Naive thymus-derived CD4-positive, alpha-beta T cell (primary cell): ENCODE measurements at regions of chr3 and their contacts with region 1.

Region 1: DNA sequence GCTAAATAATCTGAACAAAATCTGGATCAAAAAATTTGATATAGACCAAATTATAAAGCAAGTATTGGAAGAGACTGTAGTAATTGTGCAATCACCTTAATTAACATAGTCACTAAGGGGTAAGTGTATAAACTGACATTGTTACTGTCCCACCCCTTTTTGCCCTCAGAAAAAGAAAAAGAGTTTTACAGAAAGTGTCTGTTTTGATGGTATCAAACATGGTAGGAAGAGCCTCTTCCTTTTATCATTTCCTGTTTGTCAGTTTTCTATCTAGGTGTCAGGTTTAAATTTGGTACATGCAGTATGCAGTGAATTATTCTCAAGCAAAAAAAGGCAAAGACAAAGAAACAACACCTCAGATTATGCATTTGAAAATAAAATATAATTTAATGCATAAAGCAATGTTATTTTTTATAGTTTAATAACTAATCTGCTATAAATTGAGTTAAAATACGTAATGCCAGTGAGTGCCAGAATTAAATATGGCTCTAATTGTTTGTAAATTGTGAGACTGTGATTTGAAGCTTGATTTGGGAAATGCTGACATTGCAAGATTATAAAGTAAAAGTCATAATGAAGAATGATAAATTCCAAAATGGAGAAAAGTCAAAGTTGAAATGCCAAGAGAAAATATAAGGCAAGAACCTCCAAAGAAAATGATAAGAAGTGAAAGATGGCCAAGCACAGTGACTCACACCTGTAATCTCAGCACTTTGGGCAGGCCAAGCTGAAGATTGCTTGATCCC is 30.3 kb upstream of the CMC1 start:
- DNase-seq: peak in 6 of 9 donors; percentile 33 to 69 (median 54)
- ATAC-seq: peak; percentile 83
- H3K4me3 ChIP-seq: no peak overlapping the region
- H3K4me3 Mint-ChIP-seq: peak overlapping the region in 9 of 10 donors; percentile 30 to 80 (median 66)
- H3K27ac ChIP-seq: no peak overlapping the region
- H3K27ac Mint-ChIP-seq: peak overlapping the region; percentile 15 to 90 (median 68)
- H3K4me1 ChIP-seq: peaks cover 9 to 24% of the 10 kb centered on the region in 2 donors
- H3K4me1 Mint-ChIP-seq: peaks cover 11 to 47% (median 34%) of the 10 kb centered on the region in 7 donors
- H3K27me3 ChIP-seq: no peaks in the 10 kb centered on the region
- H3K27me3 Mint-ChIP-seq: no peaks in the 10 kb centered on the region

Region 2: DNA sequence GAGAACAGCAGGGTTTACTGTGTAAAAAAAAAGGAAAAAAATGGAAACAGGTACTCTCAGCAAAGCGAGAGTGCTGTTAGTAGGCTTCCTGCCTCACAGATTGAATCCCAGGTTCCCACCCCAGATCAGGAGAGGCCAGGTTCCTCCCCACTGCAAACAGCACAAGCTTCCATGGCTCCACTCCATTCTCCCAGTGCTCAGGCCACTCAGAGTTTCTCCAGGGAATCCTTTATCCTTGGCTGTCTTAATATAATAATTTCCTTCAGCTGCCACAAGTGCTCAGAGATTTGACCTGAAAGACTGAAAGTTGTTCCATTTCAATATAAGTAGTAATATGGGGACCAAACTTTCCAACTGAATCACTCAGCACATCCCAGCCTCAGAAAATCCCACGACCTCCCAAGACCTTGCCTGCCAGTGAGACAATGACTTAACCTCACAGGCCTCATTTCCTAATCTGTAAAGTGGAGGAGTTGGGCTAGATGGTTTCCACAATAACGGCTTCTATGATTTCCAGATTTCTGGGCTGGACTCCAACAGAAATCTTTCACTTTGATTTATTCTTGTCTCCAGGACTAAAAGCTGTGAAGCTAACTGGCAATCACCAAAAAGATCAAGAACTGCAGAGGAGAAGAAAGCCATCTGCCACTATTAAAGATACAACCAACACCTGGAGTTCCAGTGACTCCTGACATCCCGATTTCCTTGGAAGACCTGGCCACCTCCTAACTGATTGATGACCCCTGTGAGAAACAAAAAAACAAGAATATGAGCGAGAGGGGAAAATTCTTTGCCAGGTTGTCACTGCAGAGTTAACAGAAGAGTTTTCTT is 1131.5 kb before region 1 on chr3:
- CTCF ChIA-PET with region 1: no interaction called
- POLR2A ChIA-PET with region 1: no interaction called
- intact Hi-C with region 1: no loop called
- DNase-seq: no peak
- ATAC-seq: no peak
- H3K4me3 ChIP-seq: no peak overlapping the region
- H3K4me3 Mint-ChIP-seq: no peak overlapping the region
- H3K27ac ChIP-seq: no peak overlapping the region
- H3K27ac Mint-ChIP-seq: no peak overlapping the region
- H3K4me1 ChIP-seq: no peaks in the 10 kb centered on the region
- H3K4me1 Mint-ChIP-seq: no peaks in the 10 kb centered on the region
- H3K27me3 ChIP-seq: peaks cover 0 to 3% of the 10 kb centered on the region in 2 donors
- H3K27me3 Mint-ChIP-seq: peaks cover 0 to 15% (median 7%) of the 10 kb centered on the region in 5 donors

Region 3: GRCh38 chr3:28232659-28233058 is 21.5 kb after region 1 on chr3:
- CTCF ChIA-PET with region 1: no interaction called
- POLR2A ChIA-PET with region 1: no interaction called
- intact Hi-C with region 1: loop called in 1 of 2 experiments (anchors 2 kb)
- DNase-seq: no peak
- ATAC-seq: no peak
- H3K4me3 ChIP-seq: no peak overlapping the region
- H3K4me3 Mint-ChIP-seq: no peak overlapping the region
- H3K27ac ChIP-seq: no peak overlapping the region
- H3K27ac Mint-ChIP-seq: no peak overlapping the region
- H3K4me1 ChIP-seq: peaks cover 0 to 18% of the 10 kb centered on the region in 2 donors
- H3K4me1 Mint-ChIP-seq: peaks cover 0 to 11% (median 2%) of the 10 kb centered on the region in 7 donors
- H3K27me3 ChIP-seq: no peaks in the 10 kb centered on the region
- H3K27me3 Mint-ChIP-seq: peaks cover 0 to 4% (median 0%) of the 10 kb centered on the region in 5 donors

Region 4: DNA sequence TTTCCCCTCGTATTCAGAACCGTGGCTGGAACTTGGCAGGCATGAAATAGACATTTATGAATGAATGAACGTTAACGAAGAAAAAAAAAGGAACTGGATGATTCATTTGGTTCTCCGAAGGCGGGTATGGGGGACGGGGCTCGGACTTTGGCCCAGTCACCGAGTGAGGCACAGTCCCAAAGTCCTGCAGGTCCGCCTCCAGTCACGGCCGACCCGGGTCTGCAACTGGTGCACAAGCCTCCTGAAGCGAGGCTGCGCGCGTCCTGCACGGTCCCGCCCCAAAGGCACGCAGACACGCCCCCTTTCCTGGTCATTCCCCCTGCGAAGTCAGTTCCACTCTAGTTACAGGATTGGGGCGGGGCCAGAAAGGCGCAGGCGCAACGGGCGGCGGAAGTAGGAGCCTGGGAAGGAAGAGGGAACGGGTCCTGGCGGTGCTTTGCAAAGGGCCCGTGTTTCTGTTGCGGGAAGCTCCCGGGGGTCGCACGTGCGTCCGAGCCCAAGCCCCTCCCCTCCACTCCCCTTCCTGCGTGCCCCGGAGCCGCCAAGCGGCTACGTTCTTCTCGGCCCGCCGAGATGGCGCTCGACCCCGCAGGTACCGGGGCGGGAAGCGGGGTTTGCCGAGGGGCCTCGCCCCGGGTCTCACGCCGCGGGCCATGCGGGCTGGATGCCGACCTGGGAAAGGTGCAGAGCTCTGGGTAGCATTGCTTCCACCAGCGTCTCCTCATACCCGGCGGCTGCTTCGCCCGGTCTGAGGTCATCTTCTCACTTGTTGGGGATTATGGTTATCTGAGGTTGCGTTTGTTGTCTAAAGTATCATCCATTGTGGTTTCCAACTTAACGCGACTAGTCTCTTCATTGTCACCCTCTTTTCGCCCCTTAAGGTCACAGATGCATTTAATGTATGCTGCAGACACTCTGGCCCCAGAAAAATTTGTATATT is 30.4 kb after region 1 on chr3 and contains the start of gene CMC1:
- CTCF ChIA-PET with region 1: no interaction called
- POLR2A ChIA-PET with region 1: interaction called, 3 read pairs
- intact Hi-C with region 1: loop called in 1 of 2 experiments (anchors 1 kb)
- DNase-seq: peak; percentile 69 to 93 (median 83)
- ATAC-seq: peak; percentile 95
- H3K4me3 ChIP-seq: peak within 1 kb of the TSS; percentile 71
- H3K4me3 Mint-ChIP-seq: peak within 1 kb of the TSS; percentile 88 to 97 (median 96)
- H3K27ac ChIP-seq: peak within 1 kb of the TSS; percentile 71
- H3K27ac Mint-ChIP-seq: peak within 1 kb of the TSS; percentile 85 to 96 (median 94)
- H3K4me1 ChIP-seq: peaks cover 16 to 40% of the 10 kb centered on the region in 2 donors
- H3K4me1 Mint-ChIP-seq: peaks cover 32 to 77% (median 60%) of the 10 kb centered on the region in 7 donors
- H3K27me3 ChIP-seq: no peaks in the 10 kb centered on the region
- H3K27me3 Mint-ChIP-seq: no peaks in the 10 kb centered on the region
- total RNA-seq, gene CMC1: 11.0 to 25.1 (median 13.9) TPM